ENCODE measurements at regions of chr5 and their contacts with region 1.

Region 1: DNA sequence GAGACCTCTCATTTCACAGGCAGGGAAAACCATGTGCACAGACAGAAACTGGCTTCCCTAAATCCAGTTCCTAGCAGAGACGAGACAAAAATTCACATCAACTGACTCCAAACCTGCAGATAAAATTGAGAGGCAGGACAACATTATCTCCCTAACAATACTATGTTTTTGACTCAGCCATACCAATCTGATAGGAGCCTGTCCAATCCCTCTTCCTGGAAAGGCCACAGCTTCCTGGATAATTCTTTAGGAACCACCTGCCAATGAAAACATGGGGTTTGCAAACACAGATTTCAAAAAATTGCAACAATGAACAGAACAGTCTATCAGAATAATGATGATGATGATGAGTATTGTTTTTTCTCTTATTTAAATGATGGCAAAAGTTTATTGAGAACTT is 22.4 kb downstream of the SH3TC2 start:
- DNase-seq: no peak

Region 2: GRCh38 chr5:149063017-149063687 is 22.7 kb after region 1 on chr5 and contains the start of gene SH3TC2:
- intact Hi-C with region 1: loop called (anchors 1 kb)
- DNase-seq: peak; percentile 82
- total RNA-seq, gene SH3TC2: 2.5 TPM

Measured in cardiac septum (tissue), 1 donor.